B cell (primary cell): ENCODE measurements at regions of chr1 and their contacts with region 1.

Region 1: DNA sequence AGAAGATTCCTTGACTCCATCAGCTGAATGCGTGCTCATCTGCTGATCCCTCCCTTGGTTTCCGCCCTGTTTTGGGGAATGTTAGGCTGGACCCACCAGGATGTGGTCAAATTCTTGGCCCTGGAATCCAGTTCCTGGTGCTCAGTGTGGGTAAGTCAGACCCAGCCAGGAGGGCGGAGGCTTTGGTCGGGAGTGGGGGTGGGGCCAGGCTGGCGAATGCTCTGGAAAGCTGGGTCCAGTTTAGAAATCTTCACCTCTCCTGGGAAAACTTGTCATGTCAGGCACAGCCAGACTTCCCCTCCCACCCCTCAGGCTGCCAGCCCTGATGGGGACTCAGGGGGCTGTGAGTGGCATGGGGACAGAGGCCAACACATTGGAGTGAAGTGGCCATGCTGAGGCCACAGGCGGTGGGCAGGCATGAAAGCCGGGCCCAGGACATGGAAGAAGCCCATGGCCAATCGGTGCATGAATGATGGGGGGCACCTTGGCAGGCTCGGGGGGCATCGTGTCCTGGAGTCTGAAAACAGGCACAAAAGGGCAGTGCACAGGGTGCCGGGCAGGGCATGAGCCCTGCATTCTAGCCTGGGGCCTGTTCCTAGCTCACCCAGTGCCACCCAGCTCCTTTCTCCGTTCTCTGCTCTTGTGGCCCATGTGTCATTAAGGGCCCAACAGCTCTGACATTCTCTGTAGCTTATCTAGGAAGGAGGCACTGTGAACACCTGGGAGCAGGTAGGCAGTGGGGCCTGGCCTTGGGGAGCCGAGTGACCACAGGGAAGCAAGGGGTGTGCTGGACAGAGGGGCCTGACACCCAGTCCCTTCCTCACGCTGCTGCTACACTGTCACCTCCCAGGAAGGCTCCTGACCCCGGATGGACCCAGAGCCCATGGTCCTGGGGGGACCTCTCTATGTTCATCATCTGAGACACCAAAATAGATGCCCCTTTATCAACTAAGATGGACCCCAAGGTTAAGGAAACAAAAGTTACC is 14.6 kb upstream of the PADI1 start:
- DNase-seq: no peak
- ATAC-seq: no peak
- H3K4me3 ChIP-seq: no peak overlapping the region
- H3K4me3 Mint-ChIP-seq: no peak overlapping the region
- H3K27ac ChIP-seq: no peak overlapping the region
- H3K27ac Mint-ChIP-seq: peak overlapping the region; percentile 56
- H3K4me1 ChIP-seq: peaks cover 9 to 23% of the 10 kb centered on the region in 2 donors
- H3K4me1 Mint-ChIP-seq: peaks cover 27% of the 10 kb centered on the region
- H3K27me3 ChIP-seq: no peaks in the 10 kb centered on the region
- H3K27me3 Mint-ChIP-seq: no peaks in the 10 kb centered on the region
- CTCF ChIP-seq: no peak

Region 2: DNA sequence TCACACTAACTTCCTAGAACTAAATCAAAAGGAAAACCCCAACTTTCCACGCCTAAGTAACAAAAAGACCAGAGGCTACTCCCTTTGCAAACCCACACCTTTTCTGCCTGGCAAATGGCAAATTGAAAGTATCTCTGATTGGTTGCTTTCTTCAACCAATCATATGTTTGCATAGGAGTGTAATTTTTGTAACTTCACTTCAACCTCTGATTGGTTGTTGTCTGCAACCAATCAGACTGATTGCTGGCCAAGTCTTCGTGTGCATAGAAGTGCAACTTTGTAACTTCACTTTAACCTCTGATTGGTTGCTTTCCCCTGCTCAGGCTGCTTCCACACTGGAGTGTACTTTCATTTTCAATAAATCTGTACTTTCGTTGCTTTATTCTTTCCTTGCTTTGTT is 34.2 kb before region 1 on chr1:
- CTCF ChIA-PET with region 1: no interaction called
- POLR2A ChIA-PET with region 1: no interaction called
- intact Hi-C with region 1: loop called (anchors 5 kb)
- DNase-seq: no peak
- ATAC-seq: no peak
- H3K4me3 ChIP-seq: no peak overlapping the region
- H3K4me3 Mint-ChIP-seq: no peak overlapping the region
- H3K27ac ChIP-seq: no peak overlapping the region
- H3K27ac Mint-ChIP-seq: no peak overlapping the region
- H3K4me1 ChIP-seq: no peaks in the 10 kb centered on the region
- H3K4me1 Mint-ChIP-seq: no peaks in the 10 kb centered on the region
- H3K27me3 ChIP-seq: peaks cover 0 to 5% (median 0%) of the 10 kb centered on the region in 4 experiments
- H3K27me3 Mint-ChIP-seq: peaks cover 21% of the 10 kb centered on the region
- CTCF ChIP-seq: no peak